Posterior cingulate gyrus (tissue), 11 donors: ENCODE measurements at regions of chr6 and their contacts with region 1.

Region 1: DNA sequence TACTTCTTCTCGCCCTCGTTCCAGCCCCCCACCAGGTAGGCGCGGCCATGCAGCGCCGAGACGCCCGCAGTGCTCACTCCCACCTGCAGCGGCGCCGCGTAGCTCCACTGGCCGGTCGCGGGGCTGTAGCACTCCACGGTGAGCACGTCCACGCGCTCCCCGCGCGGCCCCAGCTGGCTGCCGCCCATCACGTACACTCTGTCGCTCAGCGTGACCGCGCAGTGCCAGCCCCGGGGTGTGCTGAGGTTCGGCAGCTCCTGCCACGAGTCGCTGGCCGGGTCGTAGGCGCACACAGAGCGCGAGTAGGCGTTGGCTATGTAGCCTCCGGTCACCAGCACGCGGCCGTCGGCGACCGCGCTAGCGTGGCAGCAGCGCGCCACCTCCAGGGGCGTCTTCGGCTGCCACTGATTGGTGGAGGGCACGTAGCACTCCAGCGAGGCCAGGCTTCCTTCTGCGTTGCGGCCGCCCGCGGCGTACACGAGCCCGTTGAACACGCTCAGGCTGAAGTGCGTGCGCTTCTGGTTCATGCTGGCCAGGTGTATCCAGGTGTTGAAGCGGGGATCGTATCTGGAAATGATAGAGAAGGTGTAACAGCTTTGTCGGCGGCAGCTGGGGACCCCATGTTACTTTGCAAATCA is 13.7 kb downstream of the KLHL31 start:
- DNase-seq: peak; percentile 49 to 96 (median 73)

Region 2: GRCh38 chr6:53725791-53726431 is 74.0 kb after region 1 on chr6:
- intact Hi-C with region 1: loop called (anchors 5 kb)
- DNase-seq: peak; percentile 67 to 97 (median 84)

Region 3: DNA sequence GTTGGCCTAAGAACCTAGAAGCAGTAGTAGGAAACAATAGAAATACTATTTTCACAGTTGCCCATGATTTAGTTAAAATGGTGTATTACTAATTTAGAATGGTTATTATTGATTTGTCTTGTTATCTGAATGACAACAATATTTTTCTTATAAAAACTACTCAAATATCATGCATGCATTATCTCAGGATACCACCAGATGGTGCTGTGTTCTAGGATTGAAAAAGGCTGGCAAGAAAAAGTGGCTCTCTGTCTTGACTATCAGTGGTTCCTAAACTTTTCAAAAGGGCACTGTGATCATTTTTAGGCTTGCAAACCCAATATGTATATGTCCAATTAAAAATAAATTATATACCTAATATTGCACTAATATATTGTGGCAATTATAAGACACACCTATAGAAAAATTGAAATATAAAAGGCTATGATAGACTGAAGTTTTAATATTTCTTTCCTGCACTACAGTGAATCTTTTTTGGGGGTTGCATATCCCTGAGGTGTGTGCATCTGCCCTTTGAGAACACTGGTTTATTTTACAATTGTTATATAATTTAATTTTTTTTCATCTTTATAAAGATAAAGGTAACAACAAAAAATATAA is 327.7 kb after region 1 on chr6:
- intact Hi-C with region 1: no loop called
- DNase-seq: no peak

Region 4: DNA sequence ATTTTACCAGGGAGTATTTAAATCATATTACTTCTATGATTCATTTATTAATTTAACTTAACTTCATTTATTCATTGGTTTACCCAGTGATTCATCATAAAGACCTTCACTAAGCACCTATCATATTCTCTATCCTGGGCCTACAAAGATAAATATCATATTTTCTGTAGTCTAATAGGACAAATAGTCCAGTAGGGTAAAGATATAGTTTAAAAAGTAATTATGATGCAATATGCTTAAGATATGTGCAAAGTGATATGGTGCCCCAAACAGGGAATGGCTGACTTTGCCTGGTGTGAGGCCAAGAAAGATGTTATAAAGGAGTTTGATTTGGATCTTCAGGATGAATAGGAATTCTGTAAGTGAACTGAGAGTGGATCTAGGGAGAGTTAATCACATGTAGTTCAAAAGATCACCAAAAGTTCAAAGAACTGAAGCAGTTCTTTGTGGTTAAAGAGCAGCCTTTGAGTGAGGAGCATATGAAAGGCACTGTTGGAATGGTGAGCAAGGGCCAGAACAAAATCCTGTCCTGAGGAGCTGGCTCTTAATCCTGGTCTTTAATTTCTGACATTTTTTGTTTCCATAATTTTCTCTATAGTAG is 504.9 kb after region 1 on chr6:
- intact Hi-C with region 1: no loop called
- DNase-seq: no peak